Ovary (tissue), 10 donors: ENCODE measurements at regions of chr9 and their contacts with region 1.

Region 1: GRCh38 chr9:6412487-6413364 is at the start of gene UHRF2:
- DNase-seq: peak; percentile 99
- H3K4me3 ChIP-seq: peak within 1 kb of the TSS; percentile 82
- H3K27ac ChIP-seq: peak within 1 kb of the TSS; percentile 74 to 97
- H3K4me1 ChIP-seq: peaks cover 9% of the 10 kb centered on the region
- H3K27me3 ChIP-seq: no peaks in the 10 kb centered on the region
- CTCF ChIP-seq: peak in 2 of 3 donors; percentile 8 to 13
- EP300 ChIP-seq: no peak
- POLR2A ChIP-seq: peak; percentile 49
- total RNA-seq, gene UHRF2: 37.3 to 63.3 (median 46.7) TPM

Region 2: GRCh38 chr9:6008169-6008979 is 404.4 kb before region 1 on chr9:
- intact Hi-C with region 1: loop called in 1 of 4 experiments (anchors 5 kb)
- DNase-seq: peak; percentile 93 to 96 (median 94)
- H3K4me3 ChIP-seq: peak overlapping the region; percentile 95
- H3K27ac ChIP-seq: peak overlapping the region; percentile 98 to 99
- H3K4me1 ChIP-seq: peaks cover 3% of the 10 kb centered on the region
- H3K27me3 ChIP-seq: no peaks in the 10 kb centered on the region
- CTCF ChIP-seq: no peak
- EP300 ChIP-seq: no peak
- POLR2A ChIP-seq: peak; percentile 30

Region 3: DNA sequence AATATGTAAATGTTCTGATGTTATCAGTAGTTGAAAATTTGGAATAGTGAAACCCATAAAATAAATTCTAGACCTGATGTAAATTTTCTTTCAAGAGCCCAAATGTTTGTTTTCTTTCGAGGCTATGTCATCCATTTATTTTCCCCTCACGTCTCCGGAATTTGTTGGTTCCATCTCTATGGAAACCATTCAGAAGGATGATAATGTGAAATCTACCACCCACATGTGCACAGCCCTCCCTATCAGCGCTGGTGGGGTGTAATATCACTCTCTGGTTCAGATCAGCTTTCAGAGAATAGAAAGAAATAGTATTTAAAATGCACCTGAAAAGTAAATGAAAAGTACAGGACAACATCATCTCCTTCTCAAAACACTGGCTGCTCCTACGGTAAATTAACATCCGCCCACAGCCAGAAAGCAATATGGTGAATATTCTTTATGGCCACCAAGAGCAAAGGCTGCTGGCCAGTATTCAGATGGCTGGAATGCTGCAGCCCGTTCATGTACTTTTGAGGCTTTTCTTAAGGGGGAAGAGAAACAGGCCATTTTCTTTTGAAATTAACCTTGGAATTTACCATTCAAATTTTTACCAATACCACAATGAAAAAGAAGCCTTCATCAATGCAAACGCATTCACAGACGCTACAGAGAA is 204.4 kb after region 1 on chr9:
- intact Hi-C with region 1: no loop called
- DNase-seq: no peak
- H3K4me3 ChIP-seq: no peak overlapping the region
- H3K27ac ChIP-seq: no peak overlapping the region
- H3K4me1 ChIP-seq: no peaks in the 10 kb centered on the region
- H3K27me3 ChIP-seq: no peaks in the 10 kb centered on the region
- CTCF ChIP-seq: no peak
- EP300 ChIP-seq: no peak
- POLR2A ChIP-seq: no peak

Region 4: DNA sequence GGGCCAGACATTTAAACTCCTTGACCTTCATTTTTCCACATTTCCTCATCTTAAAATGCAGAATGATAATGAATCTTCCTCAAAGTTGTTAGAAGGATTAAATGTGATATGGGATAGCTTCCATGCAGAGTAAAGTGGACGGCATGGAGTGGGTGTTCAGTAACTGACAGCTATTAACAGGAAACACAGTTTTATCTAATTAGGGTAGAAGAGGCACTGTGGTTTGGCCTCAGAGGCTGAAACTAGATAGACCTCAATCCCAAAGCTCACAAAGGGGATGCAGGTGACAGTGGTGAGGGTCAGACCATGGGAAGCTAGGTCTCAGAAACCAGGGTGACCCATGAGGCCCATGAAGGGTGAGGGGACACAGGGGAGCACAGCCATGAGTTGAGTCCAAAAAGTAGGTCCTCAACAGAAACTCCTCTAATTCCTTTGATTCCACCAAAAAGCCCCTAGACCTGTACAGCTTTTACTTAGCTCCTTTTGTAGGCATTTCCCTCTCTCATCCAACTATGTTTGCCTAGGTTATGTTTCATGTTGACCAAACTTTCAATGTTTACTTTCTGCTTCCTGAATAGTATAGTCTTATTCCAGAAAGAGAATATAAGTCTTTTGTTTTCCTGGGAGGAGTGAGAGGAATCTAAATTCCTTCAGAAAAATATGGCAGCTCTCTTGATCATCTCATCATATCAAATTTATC is 260.8 kb after region 1 on chr9:
- intact Hi-C with region 1: loop called in 1 of 4 experiments (anchors 10 kb)
- DNase-seq: no peak
- H3K4me3 ChIP-seq: no peak overlapping the region
- H3K27ac ChIP-seq: no peak overlapping the region
- H3K4me1 ChIP-seq: no peaks in the 10 kb centered on the region
- H3K27me3 ChIP-seq: no peaks in the 10 kb centered on the region
- CTCF ChIP-seq: no peak
- EP300 ChIP-seq: no peak
- POLR2A ChIP-seq: no peak

Region 5: DNA sequence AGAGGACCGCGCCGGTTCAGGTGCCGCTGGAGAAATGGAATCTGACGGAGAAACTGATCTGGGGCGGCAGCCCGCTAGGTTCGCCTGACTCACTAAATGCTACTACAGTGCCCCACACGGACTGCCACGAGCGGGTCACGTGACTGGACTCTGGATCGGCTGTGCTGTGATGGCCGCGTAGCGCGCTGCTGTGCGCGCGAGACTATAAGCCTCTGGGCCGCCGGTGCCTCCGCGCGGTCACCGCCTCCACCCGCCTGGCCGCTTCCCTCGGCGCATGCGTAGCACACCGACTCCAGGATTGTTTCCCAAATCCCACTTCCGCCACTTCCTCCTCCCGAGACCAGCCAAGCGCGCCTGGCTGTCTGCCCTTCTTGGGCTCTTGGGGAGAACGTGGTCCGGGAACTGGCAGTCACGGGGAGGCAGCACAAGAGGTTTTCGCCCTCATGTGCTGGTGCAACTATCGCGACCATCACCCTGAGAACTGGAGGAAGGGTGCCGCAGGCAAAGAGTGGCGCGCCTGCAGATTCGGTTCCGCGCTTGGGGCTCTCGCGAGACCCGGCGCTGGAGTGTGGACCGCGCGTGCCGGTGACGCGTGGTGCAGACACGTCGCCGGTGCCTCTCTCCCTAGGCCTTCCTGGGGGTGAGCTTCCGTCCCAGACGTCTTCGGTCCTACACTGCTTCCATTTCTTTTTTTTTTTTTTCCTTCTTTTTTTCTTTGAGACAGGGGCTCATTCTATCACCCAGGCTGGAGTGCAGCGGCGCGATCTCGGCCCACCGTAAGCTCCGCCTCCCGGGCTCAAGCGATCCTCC is 268.6 kb after region 1 on chr9:
- intact Hi-C with region 1: loop called in 3 of 4 experiments (anchors 2 to 10 kb)
- DNase-seq: peak; percentile 97
- H3K4me3 ChIP-seq: peak overlapping the region; percentile 91
- H3K27ac ChIP-seq: peak overlapping the region; percentile 69 to 92
- H3K4me1 ChIP-seq: no peaks in the 10 kb centered on the region
- H3K27me3 ChIP-seq: no peaks in the 10 kb centered on the region
- CTCF ChIP-seq: peak in 1 of 3 donors; percentile 6
- EP300 ChIP-seq: no peak
- POLR2A ChIP-seq: peak; percentile 53

Region 6: GRCh38 chr9:6757456-6758247 is 344.9 kb after region 1 on chr9 and contains the start of gene KDM4C:
- intact Hi-C with region 1: loop called in 1 of 4 experiments (anchors 5 kb)
- DNase-seq: peak; percentile 95 to 97 (median 96)
- H3K4me3 ChIP-seq: peak within 1 kb of the TSS; percentile 87
- H3K27ac ChIP-seq: peak within 1 kb of the TSS; percentile 82 to 98
- H3K4me1 ChIP-seq: peaks cover 7% of the 10 kb centered on the region
- H3K27me3 ChIP-seq: no peaks in the 10 kb centered on the region
- CTCF ChIP-seq: peak in 1 of 3 donors; percentile 6
- EP300 ChIP-seq: peak; percentile 72
- POLR2A ChIP-seq: peak; percentile 64
- total RNA-seq, gene KDM4C: 25.1 to 35.6 (median 28.3) TPM

Region 7: DNA sequence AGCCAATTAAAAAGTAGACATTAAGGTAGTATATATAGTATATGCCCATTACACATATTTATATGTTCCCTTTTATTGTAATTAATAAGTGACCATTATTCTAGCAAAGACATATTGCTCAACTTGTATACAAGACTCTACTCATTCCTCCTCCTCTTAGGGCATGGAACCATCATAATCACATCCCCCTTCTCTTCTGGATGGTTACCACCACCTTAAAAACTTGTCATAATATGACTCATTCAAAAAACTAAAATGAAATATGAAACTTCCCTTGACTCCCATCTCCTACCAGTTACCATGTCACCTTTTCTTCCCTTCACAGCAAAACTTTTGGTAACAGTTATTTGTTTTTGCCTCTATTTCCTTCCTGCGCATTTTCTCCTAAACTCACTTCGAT is 783.7 kb after region 1 on chr9:
- intact Hi-C with region 1: no loop called
- DNase-seq: no peak
- H3K4me3 ChIP-seq: no peak overlapping the region
- H3K27ac ChIP-seq: no peak overlapping the region
- H3K4me1 ChIP-seq: no peaks in the 10 kb centered on the region
- H3K27me3 ChIP-seq: no peaks in the 10 kb centered on the region
- CTCF ChIP-seq: no peak
- EP300 ChIP-seq: no peak
- POLR2A ChIP-seq: no peak